ENCODE measurements at regions of chr12 and their contacts with region 1.

Region 1: GRCh38 chr12:110600254-110600653 is 13.7 kb upstream of the TCTN1 start:
- DNase-seq: no peak
- H3K4me3 Mint-ChIP-seq: no peak overlapping the region
- H3K27ac Mint-ChIP-seq: no peak overlapping the region
- H3K4me1 Mint-ChIP-seq: peaks cover 12% of the 10 kb centered on the region
- H3K27me3 Mint-ChIP-seq: no peaks in the 10 kb centered on the region

Region 2: DNA sequence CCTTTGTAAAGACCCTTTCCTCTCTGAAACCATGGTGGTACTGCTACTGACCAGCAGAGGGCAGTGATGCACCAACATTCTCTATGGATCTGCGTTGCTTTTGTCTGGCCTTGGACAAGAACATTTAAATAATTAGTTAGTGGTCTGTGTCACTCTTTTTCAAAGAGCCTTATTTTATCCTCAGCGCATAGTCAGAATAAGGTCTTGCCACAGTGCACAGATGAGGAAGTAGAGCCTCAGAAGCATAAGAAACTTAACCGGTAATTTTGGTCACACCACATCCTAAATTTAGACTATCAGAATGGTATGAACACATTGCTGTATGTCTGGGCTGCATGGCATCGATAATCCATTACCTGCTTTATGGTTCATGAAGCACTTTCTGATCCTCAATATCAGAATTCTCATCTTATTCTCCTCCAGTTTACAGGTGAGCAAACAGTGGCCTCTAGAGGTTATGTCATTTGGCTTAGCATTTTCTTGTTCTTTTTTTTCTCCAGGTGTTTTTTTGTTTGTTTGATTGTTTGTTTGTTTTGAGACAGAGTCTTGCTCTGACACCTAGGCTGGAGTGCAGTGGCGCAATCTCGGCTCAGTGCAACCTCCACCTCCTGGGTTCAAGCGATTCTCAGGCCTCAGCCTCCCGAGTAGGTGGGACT is 499.8 kb before region 1 on chr12:
- intact Hi-C with region 1: loop called (anchors 5 kb)
- DNase-seq: peak; percentile 39
- H3K4me3 Mint-ChIP-seq: no peak overlapping the region
- H3K27ac Mint-ChIP-seq: no peak overlapping the region
- H3K4me1 Mint-ChIP-seq: peaks cover 9% of the 10 kb centered on the region
- H3K27me3 Mint-ChIP-seq: no peaks in the 10 kb centered on the region

Region 3: DNA sequence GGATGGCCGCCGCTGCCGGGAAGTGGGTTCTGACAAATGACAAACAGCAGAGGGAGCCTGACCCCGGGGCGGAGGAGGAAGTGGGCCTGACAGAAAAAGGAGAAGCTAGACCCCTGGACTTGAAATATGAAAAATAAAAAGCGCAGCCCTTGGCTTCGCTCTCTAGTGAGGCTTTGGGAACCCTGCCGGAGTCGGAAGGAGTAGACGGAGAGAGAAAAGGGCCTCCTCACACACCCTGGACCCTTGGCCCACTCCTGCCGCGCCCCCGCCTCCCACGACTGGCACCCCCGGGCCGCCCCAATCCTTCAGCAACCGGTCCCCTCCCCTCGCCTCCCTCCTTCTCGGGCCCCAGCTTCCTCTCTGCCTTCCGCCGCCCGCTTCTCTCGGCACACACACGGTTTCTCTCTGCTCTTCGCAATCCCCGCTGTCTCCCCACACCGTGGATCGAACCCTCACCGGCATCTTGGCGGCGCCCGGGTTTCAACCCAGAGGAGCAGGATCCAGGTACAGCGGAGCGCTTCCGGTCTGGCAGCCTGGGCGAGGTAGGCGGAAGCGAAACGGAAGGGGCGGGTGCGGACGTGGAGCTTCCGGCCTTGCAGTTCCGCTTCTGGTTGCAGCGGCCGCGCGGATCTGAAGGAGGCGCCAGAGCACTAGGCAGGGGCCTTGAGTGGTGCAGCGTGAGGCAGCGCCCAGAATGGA is 150.3 kb before region 1 on chr12 and contains the start of gene ARPC3:
- intact Hi-C with region 1: loop called (anchors 1 kb)
- DNase-seq: peak; percentile 94
- H3K4me3 Mint-ChIP-seq: peak within 1 kb of the TSS; percentile 100
- H3K27ac Mint-ChIP-seq: peak within 1 kb of the TSS; percentile 100
- H3K4me1 Mint-ChIP-seq: peaks cover 42% of the 10 kb centered on the region
- H3K27me3 Mint-ChIP-seq: no peaks in the 10 kb centered on the region
- total RNA-seq, gene ARPC3: 279 and 290 TPM in 2 replicates

Region 4: GRCh38 chr12:110508071-110508586 is 92.1 kb before region 1 on chr12:
- intact Hi-C with region 1: loop called (anchors 1 kb)
- DNase-seq: no peak
- H3K4me3 Mint-ChIP-seq: no peak overlapping the region
- H3K27ac Mint-ChIP-seq: no peak overlapping the region
- H3K4me1 Mint-ChIP-seq: no peaks in the 10 kb centered on the region
- H3K27me3 Mint-ChIP-seq: peaks cover 15% of the 10 kb centered on the region

Region 5: GRCh38 chr12:110555577-110556406 is 44.5 kb before region 1 on chr12:
- intact Hi-C with region 1: loop called (anchors 1 kb)
- DNase-seq: no peak
- H3K4me3 Mint-ChIP-seq: no peak overlapping the region
- H3K27ac Mint-ChIP-seq: peak overlapping the region; percentile 57
- H3K4me1 Mint-ChIP-seq: peaks cover 58% of the 10 kb centered on the region
- H3K27me3 Mint-ChIP-seq: no peaks in the 10 kb centered on the region

Region 6: GRCh38 chr12:110583137-110584059 is 16.9 kb before region 1 on chr12 and contains the start of gene PPTC7:
- intact Hi-C with region 1: no loop called
- DNase-seq: peak; percentile 93
- H3K4me3 Mint-ChIP-seq: peak within 1 kb of the TSS; percentile 95
- H3K27ac Mint-ChIP-seq: peak within 1 kb of the TSS; percentile 96
- H3K4me1 Mint-ChIP-seq: peaks cover 61% of the 10 kb centered on the region
- H3K27me3 Mint-ChIP-seq: peaks cover 3% of the 10 kb centered on the region
- total RNA-seq, gene PPTC7: 57.9 and 59.1 TPM in 2 replicates

Region 7: GRCh38 chr12:110613771-110614684 is 13.8 kb after region 1 on chr12 and contains the start of gene TCTN1:
- intact Hi-C with region 1: loop called (anchors 1 kb)
- DNase-seq: peak; percentile 98
- H3K4me3 Mint-ChIP-seq: peak within 1 kb of the TSS; percentile 83
- H3K27ac Mint-ChIP-seq: peak within 1 kb of the TSS; percentile 81
- H3K4me1 Mint-ChIP-seq: peaks cover 8% of the 10 kb centered on the region
- H3K27me3 Mint-ChIP-seq: peaks cover 4% of the 10 kb centered on the region
- total RNA-seq, gene TCTN1: 7.6 and 8.8 TPM in 2 replicates

Region 8: GRCh38 chr12:110627500-110628195 is 27.4 kb after region 1 on chr12:
- intact Hi-C with region 1: no loop called
- DNase-seq: no peak
- H3K4me3 Mint-ChIP-seq: no peak overlapping the region
- H3K27ac Mint-ChIP-seq: no peak overlapping the region
- H3K4me1 Mint-ChIP-seq: no peaks in the 10 kb centered on the region
- H3K27me3 Mint-ChIP-seq: no peaks in the 10 kb centered on the region

Region 9: GRCh38 chr12:110888256-110888991 is 288.2 kb after region 1 on chr12:
- intact Hi-C with region 1: loop called (anchors 2 kb)
- DNase-seq: no peak
- H3K4me3 Mint-ChIP-seq: no peak overlapping the region
- H3K27ac Mint-ChIP-seq: no peak overlapping the region
- H3K4me1 Mint-ChIP-seq: peaks cover 5% of the 10 kb centered on the region
- H3K27me3 Mint-ChIP-seq: peaks cover 6% of the 10 kb centered on the region